HepG2 (cell line): ENCODE measurements at regions of chr6 and their contacts with region 1.

Region 1: GRCh38 chr6:56542364-56543331 is 100.0 kb downstream of the DST start:
- DNase-seq: peak; percentile 98
- ATAC-seq: peak; percentile 96
- H3K4me3 ChIP-seq: peak overlapping the region; percentile 59 to 81 (median 76)
- H3K27ac ChIP-seq: peak overlapping the region; percentile 92
- H3K4me1 ChIP-seq: peaks cover 49% of the 10 kb centered on the region
- H3K27me3 ChIP-seq: no peaks in the 10 kb centered on the region; a peak in 1 of 5 replicates
- CTCF ChIP-seq: peak; percentile 85
- EP300 ChIP-seq: peak; percentile 17 to 38; a peak in 1 of 4 replicates
- POLR2A ChIP-seq: peak; percentile 82 to 96
- RAD21 ChIP-seq: peak; percentile 82

Region 2: GRCh38 chr6:56399250-56399671 is 143.4 kb before region 1 on chr6:
- CTCF ChIA-PET with region 1: no interaction called
- POLR2A ChIA-PET with region 1: interaction called, 26 read pairs
- in situ Hi-C with region 1: no loop called
- intact Hi-C with region 1: loop called (anchors 1 kb)
- DNase-seq: peak; percentile 93
- ATAC-seq: peak; percentile 88
- H3K4me3 ChIP-seq: peak overlapping the region; percentile 11 to 52 (median 29); a peak in 3 of 6 replicates
- H3K27ac ChIP-seq: peak overlapping the region; percentile 97
- H3K4me1 ChIP-seq: peaks cover 77% of the 10 kb centered on the region
- H3K27me3 ChIP-seq: no peaks in the 10 kb centered on the region
- CTCF ChIP-seq: no peak
- EP300 ChIP-seq: peak in 1 of 2 experiments; percentile 40; a peak in 1 of 4 replicates
- POLR2A ChIP-seq: no peak
- RAD21 ChIP-seq: no peak

Region 3: GRCh38 chr6:56510984-56511531 is 31.6 kb before region 1 on chr6:
- CTCF ChIA-PET with region 1: no interaction called
- POLR2A ChIA-PET with region 1: interaction called, 18 read pairs
- in situ Hi-C with region 1: no loop called
- intact Hi-C with region 1: loop called (anchors 2 kb)
- DNase-seq: peak; percentile 78
- ATAC-seq: peak; percentile 90
- H3K4me3 ChIP-seq: no peak overlapping the region
- H3K27ac ChIP-seq: peak overlapping the region; percentile 28
- H3K4me1 ChIP-seq: peaks cover 48% of the 10 kb centered on the region
- H3K27me3 ChIP-seq: no peaks in the 10 kb centered on the region
- CTCF ChIP-seq: no peak
- EP300 ChIP-seq: peak in 1 of 2 experiments; percentile 79; a peak in 2 of 4 replicates
- POLR2A ChIP-seq: no peak
- RAD21 ChIP-seq: no peak

Region 4: DNA sequence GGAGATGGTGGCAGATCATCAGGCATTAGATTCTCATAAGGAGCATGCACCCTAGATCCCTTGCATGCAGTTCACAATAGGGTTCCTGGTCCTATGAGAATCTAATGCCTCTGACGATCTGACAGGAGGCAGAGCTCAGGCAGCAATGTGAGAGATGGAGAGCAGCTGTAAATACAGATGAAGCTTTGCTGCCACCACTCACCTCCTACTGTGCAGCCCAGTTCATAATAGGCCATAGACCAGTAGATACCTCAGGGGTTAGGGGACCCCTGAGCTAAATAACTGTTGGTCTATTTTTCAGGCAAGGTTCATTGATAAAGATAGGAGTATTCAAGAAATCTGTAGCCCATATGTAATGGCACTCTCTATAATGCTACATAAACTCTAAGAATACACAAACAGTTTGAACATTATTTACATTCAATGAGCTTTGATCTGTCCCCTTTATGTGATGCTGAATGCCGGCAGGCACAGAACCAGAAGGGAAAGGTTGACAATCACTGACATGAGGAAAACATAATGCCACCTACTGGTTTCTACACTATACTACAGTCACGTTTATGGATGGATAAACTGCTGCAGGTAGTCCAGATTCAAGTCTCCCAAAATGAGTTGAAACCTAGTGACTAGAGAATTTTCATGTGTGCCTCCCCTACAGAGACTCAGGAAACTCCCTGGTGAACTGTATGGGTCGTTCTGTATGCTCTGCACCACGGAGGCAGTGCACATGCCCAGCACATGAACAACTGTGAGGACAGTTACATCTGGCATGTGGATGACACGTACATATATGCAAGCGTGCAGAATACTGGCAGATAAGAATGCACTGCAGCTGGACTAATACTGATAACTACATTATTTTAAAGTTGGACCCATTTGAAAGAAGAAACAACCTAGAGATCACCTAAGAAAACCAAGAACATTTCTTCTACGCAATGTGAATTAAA is 28.0 kb after region 1 on chr6:
- CTCF ChIA-PET with region 1: no interaction called
- POLR2A ChIA-PET with region 1: interaction called, 7 read pairs
- in situ Hi-C with region 1: no loop called
- intact Hi-C with region 1: loop called (anchors 1 kb)
- DNase-seq: peak; percentile 60
- ATAC-seq: peak; percentile 96
- H3K4me3 ChIP-seq: no peak overlapping the region
- H3K27ac ChIP-seq: no peak overlapping the region
- H3K4me1 ChIP-seq: peaks cover 29% of the 10 kb centered on the region
- H3K27me3 ChIP-seq: no peaks in the 10 kb centered on the region
- CTCF ChIP-seq: peak; percentile 82
- EP300 ChIP-seq: no peak
- POLR2A ChIP-seq: no peak
- RAD21 ChIP-seq: peak; percentile 42; the same call in 1 of the 2 replicates

Region 5: DNA sequence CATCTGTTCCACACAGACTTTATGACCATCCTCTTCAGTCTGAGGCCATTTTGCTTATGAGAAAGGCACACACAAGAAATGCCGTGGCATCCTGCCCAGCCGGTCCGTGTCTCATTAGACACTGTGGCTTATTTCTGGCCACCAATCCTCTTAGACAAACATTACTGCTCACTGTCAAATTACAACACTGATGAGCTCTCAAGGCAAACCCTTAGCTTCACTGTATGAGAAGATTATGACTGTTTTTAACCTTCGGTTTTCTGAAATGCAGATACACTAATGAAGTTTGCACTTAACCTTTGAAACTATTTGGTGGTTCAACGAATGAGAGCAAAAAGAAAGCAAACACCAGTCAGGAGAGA is 150.6 kb after region 1 on chr6:
- CTCF ChIA-PET with region 1: no interaction called
- POLR2A ChIA-PET with region 1: interaction called, 11 read pairs
- in situ Hi-C with region 1: no loop called
- intact Hi-C with region 1: no loop called
- DNase-seq: peak; percentile 75
- ATAC-seq: peak; percentile 84
- H3K4me3 ChIP-seq: peak overlapping the region; percentile 56 to 64 (median 60)
- H3K27ac ChIP-seq: peak overlapping the region; percentile 68
- H3K4me1 ChIP-seq: peaks cover 55% of the 10 kb centered on the region
- H3K27me3 ChIP-seq: no peaks in the 10 kb centered on the region
- CTCF ChIP-seq: no peak
- EP300 ChIP-seq: no peak
- POLR2A ChIP-seq: peak in 1 of 2 experiments; percentile 67; a peak in 2 of 4 replicates
- RAD21 ChIP-seq: no peak